CD14-positive monocyte (primary cell): ENCODE measurements at regions of chr3 and their contacts with region 1.

Region 1: DNA sequence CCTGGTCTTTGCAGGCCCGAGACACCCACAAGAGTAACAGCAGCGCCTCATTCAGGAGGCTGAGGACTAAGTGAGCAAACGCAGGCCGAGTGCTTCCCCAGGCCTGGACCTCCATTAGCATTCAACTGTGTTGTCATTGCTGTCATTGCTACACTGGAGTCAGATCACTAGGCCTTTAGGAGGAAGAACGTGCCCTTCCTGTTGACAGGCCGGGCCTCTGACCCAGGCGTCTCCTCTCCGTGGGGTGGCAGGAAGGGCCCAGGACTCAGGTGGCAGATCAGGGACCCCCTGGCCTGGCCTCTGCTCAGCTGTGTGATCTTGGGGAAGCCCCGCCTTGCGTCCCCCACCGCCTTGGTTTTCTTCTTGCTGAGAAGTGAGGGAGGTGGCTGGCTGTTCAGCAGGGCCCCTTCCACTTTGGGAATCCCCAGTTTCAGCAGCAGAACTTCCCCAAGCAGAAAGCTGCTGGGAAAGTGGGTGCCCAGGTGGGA is 19.1 kb downstream of the ZDHHC19 start:
- DNase-seq: peak; percentile 81 to 91 (median 87)
- H3K4me3 ChIP-seq: peak overlapping the region in 1 of 3 experiments; percentile 7
- H3K4me3 Mint-ChIP-seq: peak overlapping the region; percentile 65 to 72
- H3K27ac ChIP-seq: peak overlapping the region; percentile 96 to 99
- H3K27ac Mint-ChIP-seq: peak overlapping the region; percentile 98 to 100 (median 99)
- H3K4me1 ChIP-seq: peaks cover 51 to 61% of the 10 kb centered on the region in 2 donors
- H3K4me1 Mint-ChIP-seq: peaks cover 54% of the 10 kb centered on the region
- H3K27me3 ChIP-seq: no peaks in the 10 kb centered on the region
- H3K27me3 Mint-ChIP-seq: peaks cover 0 to 4% (median 2%) of the 10 kb centered on the region in 3 donors
- CTCF ChIP-seq: no peak

Region 2: GRCh38 chr3:196073188-196073838 is 118.8 kb before region 1 on chr3:
- intact Hi-C with region 1: loop called (anchors 1 kb)
- DNase-seq: peak; percentile 68 to 73 (median 68)
- H3K4me3 ChIP-seq: no peak overlapping the region
- H3K4me3 Mint-ChIP-seq: no peak overlapping the region
- H3K27ac ChIP-seq: peak overlapping the region in 1 of 2 donors; percentile 41
- H3K27ac Mint-ChIP-seq: peak overlapping the region in 4 of 7 donors; percentile 30 to 84 (median 60)
- H3K4me1 ChIP-seq: no peaks in the 10 kb centered on the region
- H3K4me1 Mint-ChIP-seq: no peaks in the 10 kb centered on the region
- H3K27me3 ChIP-seq: no peaks in the 10 kb centered on the region
- H3K27me3 Mint-ChIP-seq: peaks cover 0 to 1% (median 0%) of the 10 kb centered on the region in 3 donors
- CTCF ChIP-seq: peak; percentile 78

Region 3: DNA sequence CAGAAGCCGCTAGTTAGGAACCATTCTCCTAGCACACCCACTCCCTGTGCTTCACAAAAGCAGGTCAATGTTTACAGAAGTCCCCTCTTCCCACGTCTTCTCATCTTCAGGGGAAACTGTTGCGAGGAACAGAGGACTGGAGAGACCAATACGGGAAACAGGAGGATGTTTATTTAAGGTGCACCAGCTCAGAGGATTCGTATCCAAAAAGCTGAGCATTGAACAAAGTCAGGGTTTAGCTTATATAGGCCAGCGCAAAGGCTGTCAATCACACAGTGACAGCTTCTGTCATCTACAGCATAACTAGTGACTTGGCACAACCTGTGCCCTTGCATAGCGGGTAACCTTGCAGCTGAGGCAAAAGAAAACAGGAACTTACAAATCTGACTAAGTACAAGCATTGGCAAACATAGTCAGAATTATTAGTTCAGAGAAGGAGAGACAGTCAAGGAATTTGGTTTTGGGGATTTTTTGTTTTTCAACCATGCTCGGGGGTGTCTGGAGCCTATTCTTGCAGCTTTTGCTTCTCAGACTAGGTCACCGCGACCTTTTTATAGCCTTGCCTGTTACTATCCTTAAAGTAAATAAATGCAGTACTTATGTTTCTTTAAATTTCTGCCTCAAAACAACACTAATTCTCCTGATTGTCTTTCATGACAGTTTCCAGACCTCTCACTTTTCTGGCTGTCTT is 42.1 kb before region 1 on chr3:
- intact Hi-C with region 1: loop called (anchors 5 kb)
- DNase-seq: peak; percentile 57 to 71 (median 69)
- H3K4me3 ChIP-seq: no peak overlapping the region
- H3K4me3 Mint-ChIP-seq: no peak overlapping the region
- H3K27ac ChIP-seq: peak overlapping the region in 1 of 2 donors; percentile 22
- H3K27ac Mint-ChIP-seq: peak overlapping the region; percentile 6 to 87 (median 65)
- H3K4me1 ChIP-seq: peaks cover 8 to 14% of the 10 kb centered on the region in 2 donors
- H3K4me1 Mint-ChIP-seq: peaks cover 22% of the 10 kb centered on the region
- H3K27me3 ChIP-seq: no peaks in the 10 kb centered on the region
- H3K27me3 Mint-ChIP-seq: peaks cover 0 to 4% (median 2%) of the 10 kb centered on the region in 3 donors
- CTCF ChIP-seq: no peak

Region 4: GRCh38 chr3:196159952-196160804 is 31.9 kb before region 1 on chr3:
- intact Hi-C with region 1: loop called in 1 of 2 experiments (anchors 5 kb)
- DNase-seq: peak; percentile 64 to 82 (median 74)
- H3K4me3 ChIP-seq: peak overlapping the region in 1 of 3 experiments; percentile 4
- H3K4me3 Mint-ChIP-seq: peak overlapping the region; percentile 64 to 84
- H3K27ac ChIP-seq: peak overlapping the region; percentile 74 to 81
- H3K27ac Mint-ChIP-seq: peak overlapping the region; percentile 85 to 96 (median 93)
- H3K4me1 ChIP-seq: peaks cover 32 to 36% of the 10 kb centered on the region in 2 donors
- H3K4me1 Mint-ChIP-seq: peaks cover 17% of the 10 kb centered on the region
- H3K27me3 ChIP-seq: no peaks in the 10 kb centered on the region
- H3K27me3 Mint-ChIP-seq: no peaks in the 10 kb centered on the region
- CTCF ChIP-seq: no peak

Region 5: DNA sequence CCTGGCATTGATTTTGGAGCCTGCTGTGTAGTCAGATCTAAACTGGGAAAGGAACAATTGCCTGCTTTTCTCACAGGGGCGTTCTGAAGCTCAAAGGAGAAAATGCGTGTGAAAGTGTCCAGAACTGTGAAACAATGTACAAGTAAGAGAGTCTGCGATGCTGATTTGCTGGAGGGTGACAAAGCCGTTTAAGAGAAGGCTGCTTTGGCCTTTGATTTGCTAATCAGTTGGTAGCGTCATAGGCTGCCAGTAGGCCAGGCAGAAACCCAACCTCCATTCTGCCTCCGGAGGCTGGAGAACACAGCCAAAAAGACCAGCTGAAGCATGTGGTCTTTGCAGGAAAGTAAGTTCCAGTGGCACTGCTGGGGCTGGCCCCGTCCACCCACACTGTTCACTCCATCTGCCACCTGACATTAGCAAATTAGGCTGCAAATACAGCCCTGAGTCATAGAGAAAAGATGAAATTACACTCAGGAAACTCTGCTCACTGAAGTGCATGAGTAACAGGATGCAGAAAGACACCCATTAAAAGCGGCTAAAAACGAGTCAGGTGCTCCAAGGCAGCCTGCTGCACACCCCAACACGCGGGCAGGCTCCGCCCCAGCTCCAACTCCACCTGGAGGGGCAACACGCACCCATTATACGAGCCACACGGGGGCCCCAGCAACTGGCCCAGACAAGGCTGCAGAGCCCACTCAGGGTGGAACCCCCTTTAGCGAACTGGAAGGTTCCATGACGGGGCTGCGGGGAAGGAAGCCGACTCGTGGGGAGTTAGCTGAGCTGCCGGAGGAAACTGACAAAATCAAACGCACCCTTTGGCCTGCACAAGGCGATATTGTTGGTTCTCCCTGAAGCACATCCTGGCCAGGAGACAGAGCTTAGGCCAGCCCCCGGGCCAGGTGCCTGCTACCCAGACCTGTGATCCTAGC is 12.4 kb before region 1 on chr3:
- intact Hi-C with region 1: loop called in 1 of 2 experiments (anchors 2 kb)
- DNase-seq: peak; percentile 82 to 88 (median 86)
- H3K4me3 ChIP-seq: peak overlapping the region in 1 of 3 experiments; percentile 61
- H3K4me3 Mint-ChIP-seq: peak overlapping the region; percentile 58 to 76
- H3K27ac ChIP-seq: peak overlapping the region; percentile 28 to 87
- H3K27ac Mint-ChIP-seq: peak overlapping the region; percentile 68 to 98 (median 91)
- H3K4me1 ChIP-seq: peaks cover 26 to 28% of the 10 kb centered on the region in 2 donors
- H3K4me1 Mint-ChIP-seq: peaks cover 44% of the 10 kb centered on the region
- H3K27me3 ChIP-seq: no peaks in the 10 kb centered on the region
- H3K27me3 Mint-ChIP-seq: peaks cover 0 to 5% (median 3%) of the 10 kb centered on the region in 3 donors
- CTCF ChIP-seq: peak; percentile 10

Region 6: DNA sequence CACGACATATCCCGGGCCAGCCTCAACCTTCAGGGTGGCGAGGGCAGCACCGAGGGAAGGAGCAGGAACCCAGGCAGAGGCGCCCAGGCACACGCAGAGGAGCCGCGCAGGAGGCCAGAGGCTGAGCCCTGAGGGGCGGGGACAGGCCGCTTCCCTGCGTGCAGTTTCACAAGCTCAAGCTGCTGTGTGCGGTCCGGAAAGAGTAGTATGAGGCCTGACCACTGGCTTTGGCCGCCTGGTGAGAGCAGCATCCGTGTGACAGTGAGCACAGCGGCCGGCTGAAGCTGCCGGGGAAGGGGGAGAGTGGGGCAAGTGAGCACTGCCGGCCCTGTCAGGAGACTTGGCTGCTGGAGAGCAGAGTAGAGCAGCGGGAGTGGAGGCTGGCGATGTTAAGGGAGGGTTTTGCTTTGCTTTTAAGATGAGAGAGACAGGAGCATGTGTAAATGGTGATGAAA is 10.5 kb after region 1 on chr3:
- intact Hi-C with region 1: no loop called
- DNase-seq: peak; percentile 84 to 85 (median 84)
- H3K4me3 ChIP-seq: peak overlapping the region in 1 of 3 experiments; percentile 13
- H3K4me3 Mint-ChIP-seq: peak overlapping the region; percentile 43 to 88
- H3K27ac ChIP-seq: peak overlapping the region; percentile 66 to 72
- H3K27ac Mint-ChIP-seq: peak overlapping the region; percentile 85 to 94 (median 90)
- H3K4me1 ChIP-seq: peaks cover 31 to 45% of the 10 kb centered on the region in 2 donors
- H3K4me1 Mint-ChIP-seq: peaks cover 41% of the 10 kb centered on the region
- H3K27me3 ChIP-seq: no peaks in the 10 kb centered on the region
- H3K27me3 Mint-ChIP-seq: peaks cover 5 to 14% (median 11%) of the 10 kb centered on the region in 3 donors
- CTCF ChIP-seq: no peak

Region 7: DNA sequence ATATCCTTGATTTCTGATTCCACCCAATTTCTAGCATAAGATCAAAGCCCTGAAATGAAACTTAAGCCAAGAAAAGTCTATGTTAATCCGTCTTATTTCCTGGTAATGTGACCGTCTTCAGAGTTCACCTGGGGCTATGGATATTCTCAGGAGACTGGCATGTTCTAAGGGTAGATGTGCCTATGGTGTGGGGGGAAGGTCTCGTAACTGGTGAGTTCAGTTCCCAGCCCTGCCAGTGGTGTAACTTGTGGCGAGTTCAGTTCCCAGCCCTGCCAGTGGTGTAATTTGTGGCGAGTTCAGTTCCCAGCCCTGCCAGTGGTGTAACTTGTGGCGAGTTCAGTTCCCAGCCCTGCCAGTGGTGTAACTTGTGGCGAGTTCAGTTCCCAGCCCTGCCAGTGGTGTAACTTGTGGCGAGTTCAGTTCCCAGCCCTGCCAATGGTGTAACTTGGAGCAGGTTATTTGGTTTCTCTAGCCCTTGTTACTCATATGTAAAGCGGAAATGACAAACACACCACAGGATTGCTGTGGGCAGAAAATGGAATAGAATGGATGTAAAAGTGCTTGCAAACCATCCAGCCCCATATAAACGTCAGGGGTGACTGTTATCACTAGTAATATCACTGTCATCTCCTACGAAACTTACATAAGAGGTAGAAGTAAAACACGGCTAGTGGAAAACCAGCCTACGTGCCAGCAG is 54.7 kb after region 1 on chr3:
- intact Hi-C with region 1: no loop called
- DNase-seq: peak; percentile 25 to 41 (median 41)
- H3K4me3 ChIP-seq: no peak overlapping the region
- H3K4me3 Mint-ChIP-seq: no peak overlapping the region
- H3K27ac ChIP-seq: peak overlapping the region in 1 of 2 donors; percentile 47
- H3K27ac Mint-ChIP-seq: peak overlapping the region in 6 of 7 donors; percentile 12 to 86 (median 71)
- H3K4me1 ChIP-seq: no peaks in the 10 kb centered on the region
- H3K4me1 Mint-ChIP-seq: peaks cover 4% of the 10 kb centered on the region
- H3K27me3 ChIP-seq: no peaks in the 10 kb centered on the region
- H3K27me3 Mint-ChIP-seq: no peaks in the 10 kb centered on the region
- CTCF ChIP-seq: no peak